ENCODE measurements at regions of chr4 and their contacts with region 1.

Region 1: DNA sequence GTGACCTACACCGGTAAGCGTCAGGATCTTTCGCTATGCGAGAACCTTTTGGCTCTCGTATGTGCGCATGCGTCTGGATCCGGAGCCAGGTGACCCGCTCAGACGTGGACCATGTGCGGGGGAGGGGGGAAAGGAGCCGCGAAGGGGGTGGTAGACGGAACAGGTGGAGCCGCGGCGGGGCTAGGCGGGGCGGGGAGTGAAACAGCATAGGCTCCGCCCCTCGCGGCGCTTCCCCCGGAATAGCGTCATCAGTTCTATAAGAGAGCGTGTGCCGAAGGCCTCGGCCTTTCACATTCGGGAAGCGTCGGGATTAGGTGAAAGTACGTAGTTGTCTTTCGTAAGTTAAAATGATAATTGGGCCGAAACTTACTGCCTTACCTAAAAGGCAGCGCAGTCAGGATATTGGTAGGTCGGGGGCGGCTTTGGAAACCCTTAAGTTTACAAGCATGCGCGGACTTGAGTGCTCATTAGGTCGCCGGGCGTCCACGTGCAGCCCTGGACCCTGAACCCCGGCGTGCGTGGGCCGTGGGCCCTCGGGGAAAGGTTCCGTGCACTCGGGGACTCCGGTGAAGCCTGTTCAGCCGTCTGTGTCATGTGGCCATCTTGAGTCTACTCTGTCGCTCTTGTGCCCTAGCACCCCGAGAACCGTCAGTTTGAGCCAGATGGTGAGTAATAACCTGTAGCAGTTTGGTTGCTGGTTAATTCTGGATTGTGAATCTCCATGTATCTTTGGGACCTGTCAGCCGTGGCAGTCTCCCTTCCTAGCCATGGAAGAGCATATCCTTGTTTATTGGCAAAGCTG is 74.1 kb downstream of the PRSS12 start:
- DNase-seq: peak; percentile 94
- H3K4me3 ChIP-seq: peak overlapping the region; percentile 91
- H3K27ac ChIP-seq: peak overlapping the region; percentile 76
- H3K4me1 ChIP-seq: peaks cover 45% of the 10 kb centered on the region
- CTCF ChIP-seq: no peak

Region 2: DNA sequence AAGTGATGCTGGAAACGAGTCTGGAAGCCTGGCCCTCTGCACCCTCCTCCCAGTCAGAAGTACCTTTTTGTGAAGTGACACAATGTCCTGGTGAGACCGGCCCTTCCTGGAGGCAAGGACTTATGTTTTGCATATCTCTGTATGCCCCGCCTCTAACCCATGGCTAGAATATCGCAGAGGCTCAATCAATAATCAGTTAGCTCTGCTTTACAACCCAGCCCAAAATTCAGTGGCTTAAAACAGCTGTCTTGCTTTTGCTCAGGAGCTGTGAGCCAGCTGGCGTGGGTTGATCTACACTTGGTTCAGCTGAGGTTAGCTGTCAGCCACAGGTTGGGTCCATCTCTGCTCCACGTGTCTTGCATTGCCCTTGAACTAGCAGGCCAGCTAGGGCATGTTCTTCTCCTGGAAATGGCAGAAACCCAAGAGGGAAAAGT is 307.7 kb after region 1 on chr4:
- CTCF ChIA-PET with region 1: no interaction called
- POLR2A ChIA-PET with region 1: no interaction called
- intact Hi-C with region 1: loop called (anchors 1 kb)
- DNase-seq: no peak
- H3K4me3 ChIP-seq: no peak overlapping the region
- H3K27ac ChIP-seq: no peak overlapping the region
- H3K4me1 ChIP-seq: peaks cover 27% of the 10 kb centered on the region
- CTCF ChIP-seq: no peak

Region 3: DNA sequence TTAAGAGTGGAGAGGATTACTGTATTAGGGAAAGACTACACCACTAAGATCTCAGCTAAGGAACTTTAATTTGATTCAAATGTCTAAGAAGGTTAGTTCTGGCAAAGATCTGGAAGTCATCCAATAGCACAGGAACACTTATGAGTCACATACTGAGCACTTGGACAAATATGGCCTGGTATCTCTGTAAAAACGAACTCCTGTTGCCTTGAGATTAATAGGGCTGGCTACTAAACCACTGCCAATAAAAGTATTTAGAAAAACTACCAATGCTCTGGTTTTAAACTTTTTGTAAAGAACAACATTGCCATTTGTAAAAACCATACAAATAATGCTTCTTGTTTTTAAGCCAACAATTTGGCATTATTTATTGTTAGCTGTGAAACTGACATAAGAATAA is 486.7 kb after region 1 on chr4:
- CTCF ChIA-PET with region 1: no interaction called
- POLR2A ChIA-PET with region 1: no interaction called
- intact Hi-C with region 1: loop called (anchors 10 kb)
- DNase-seq: no peak
- H3K4me3 ChIP-seq: no peak overlapping the region
- H3K27ac ChIP-seq: no peak overlapping the region
- H3K4me1 ChIP-seq: peaks cover 37% of the 10 kb centered on the region
- CTCF ChIP-seq: no peak

Region 4: GRCh38 chr4:118888666-118889311 is 610.1 kb after region 1 on chr4 and contains the start of gene SYNPO2:
- CTCF ChIA-PET with region 1: no interaction called
- POLR2A ChIA-PET with region 1: no interaction called
- intact Hi-C with region 1: loop called (anchors 10 kb)
- DNase-seq: peak; percentile 3
- H3K4me3 ChIP-seq: peak within 1 kb of the TSS; percentile 28
- H3K27ac ChIP-seq: no peak within 1 kb of the TSS
- H3K4me1 ChIP-seq: no peaks in the 10 kb centered on the region
- CTCF ChIP-seq: no peak
- total RNA-seq, gene SYNPO2: 0.19 and 0.31 TPM in 2 replicates